Activated T-helper 2 cell treated with anti-CD3 and anti-CD28 coated beads, Interferon-gamma antibody, Interleukin-2, Interleukin-4, amounts not matched to agents 10 μg/mL and 5 μg/mL and 100 μg/mL, durations not matched to agents 14 hours and 24 hours and 36 hours (primary cell): ENCODE measurements at regions of chr16 and their contacts with region 1.

Region 1: GRCh38 chr16:15592324-15592723 is 50.6 kb downstream of the MARF1 start:
- DNase-seq: no peak
- H3K4me3 Mint-ChIP-seq: no peak overlapping the region
- H3K27ac Mint-ChIP-seq: no peak overlapping the region
- H3K4me1 Mint-ChIP-seq: peaks cover 23% of the 10 kb centered on the region
- H3K27me3 Mint-ChIP-seq: no peaks in the 10 kb centered on the region

Region 2: DNA sequence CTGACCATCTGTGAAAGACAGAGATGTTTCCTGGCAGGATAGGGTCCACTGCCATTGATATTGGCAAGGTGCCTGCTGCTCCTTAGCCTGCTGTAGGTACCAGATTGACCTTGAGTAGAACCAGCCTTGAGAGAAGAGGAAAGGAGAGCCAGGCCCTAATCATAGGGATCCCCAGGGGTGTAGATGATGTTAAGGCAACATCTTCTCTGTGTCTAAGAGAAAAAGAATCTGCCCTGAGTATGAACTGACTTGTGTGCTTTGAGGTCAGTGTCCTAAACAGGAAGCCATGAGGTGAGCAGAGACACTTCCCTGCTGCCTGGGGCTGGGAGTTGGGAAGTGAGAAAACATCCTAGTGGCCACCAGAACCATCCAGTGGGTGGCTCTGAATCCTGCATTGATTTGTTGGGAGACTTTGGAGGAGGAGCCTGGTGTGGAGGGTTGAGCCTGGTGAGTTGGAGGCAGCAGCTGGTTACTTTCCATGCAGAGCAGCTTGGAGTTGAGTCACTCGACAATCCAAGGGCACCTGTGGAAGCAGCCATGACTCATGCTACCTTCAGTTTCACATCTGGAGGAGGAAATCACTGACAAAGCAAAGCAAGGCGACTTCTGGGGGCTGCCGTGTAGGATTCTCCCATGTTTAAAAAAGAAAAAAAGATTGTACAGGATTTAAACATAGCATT is 110.1 kb before region 1 on chr16:
- intact Hi-C with region 1: loop called (anchors 2 kb)
- DNase-seq: no peak
- H3K4me3 Mint-ChIP-seq: no peak overlapping the region
- H3K27ac Mint-ChIP-seq: peak overlapping the region; percentile 44
- H3K4me1 Mint-ChIP-seq: peaks cover 27% of the 10 kb centered on the region
- H3K27me3 Mint-ChIP-seq: no peaks in the 10 kb centered on the region

Region 3: GRCh38 chr16:15509593-15510535 is 82.5 kb before region 1 on chr16:
- intact Hi-C with region 1: loop called (anchors 1 kb)
- DNase-seq: peak; percentile 22
- H3K4me3 Mint-ChIP-seq: no peak overlapping the region
- H3K27ac Mint-ChIP-seq: peak overlapping the region; percentile 80
- H3K4me1 Mint-ChIP-seq: peaks cover 35% of the 10 kb centered on the region
- H3K27me3 Mint-ChIP-seq: peaks cover 4% of the 10 kb centered on the region

Region 4: GRCh38 chr16:15572329-15573001 is 19.9 kb before region 1 on chr16:
- intact Hi-C with region 1: loop called (anchors 1 kb)
- DNase-seq: no peak
- H3K4me3 Mint-ChIP-seq: no peak overlapping the region
- H3K27ac Mint-ChIP-seq: peak overlapping the region; percentile 68
- H3K4me1 Mint-ChIP-seq: peaks cover 19% of the 10 kb centered on the region
- H3K27me3 Mint-ChIP-seq: no peaks in the 10 kb centered on the region

Region 5: DNA sequence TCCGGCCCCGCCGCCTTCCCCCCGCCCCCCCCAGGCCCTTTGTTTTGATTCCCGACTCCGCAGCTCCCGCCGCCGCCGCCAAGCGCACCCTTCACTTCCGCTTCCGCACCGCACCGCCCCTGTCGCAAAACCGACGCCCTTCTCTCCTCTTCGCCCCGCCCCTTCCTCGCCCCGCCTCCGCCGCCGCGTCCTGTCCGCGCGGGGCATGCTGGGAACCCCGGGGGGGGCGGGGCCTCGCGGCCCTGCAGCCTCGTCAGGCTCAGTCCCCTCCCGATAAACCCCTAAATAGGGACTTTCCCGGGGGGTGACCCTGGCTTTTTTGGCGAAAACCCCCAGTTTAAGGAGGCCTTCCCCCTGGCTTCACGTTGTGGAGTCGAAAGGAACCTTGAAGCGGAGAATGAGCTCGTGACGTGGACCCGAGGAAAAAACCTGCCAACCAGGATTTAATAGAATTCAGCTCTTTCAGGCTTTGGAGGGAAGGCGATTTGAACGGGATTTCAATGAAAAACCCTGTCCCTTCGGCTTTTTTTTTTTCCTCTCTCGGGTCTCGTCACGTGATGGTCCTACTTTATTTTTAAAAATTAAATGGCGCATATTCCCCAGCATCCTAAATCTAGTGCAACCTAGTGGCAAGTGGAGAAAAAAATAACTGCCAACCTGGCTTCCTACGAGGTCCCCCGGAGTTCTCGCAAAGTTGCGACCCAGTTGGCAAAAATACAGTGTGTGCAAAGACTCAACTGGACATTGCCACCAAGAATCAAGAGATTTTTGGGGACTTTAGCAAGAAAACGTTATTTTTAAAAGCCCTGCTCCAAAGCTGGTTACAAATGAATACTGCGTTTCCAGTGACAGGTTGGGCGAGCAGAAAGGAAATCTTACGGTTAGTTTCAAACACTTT is 51.0 kb after region 1 on chr16 and contains the start of gene MARF1:
- intact Hi-C with region 1: loop called (anchors 1 kb)
- DNase-seq: peak; percentile 98
- H3K4me3 Mint-ChIP-seq: peak within 1 kb of the TSS; percentile 93
- H3K27ac Mint-ChIP-seq: peak within 1 kb of the TSS; percentile 98
- H3K4me1 Mint-ChIP-seq: peaks cover 42% of the 10 kb centered on the region
- H3K27me3 Mint-ChIP-seq: no peaks in the 10 kb centered on the region
- total RNA-seq, gene MARF1: 49.9 and 56.4 TPM in 2 replicates

Region 6: DNA sequence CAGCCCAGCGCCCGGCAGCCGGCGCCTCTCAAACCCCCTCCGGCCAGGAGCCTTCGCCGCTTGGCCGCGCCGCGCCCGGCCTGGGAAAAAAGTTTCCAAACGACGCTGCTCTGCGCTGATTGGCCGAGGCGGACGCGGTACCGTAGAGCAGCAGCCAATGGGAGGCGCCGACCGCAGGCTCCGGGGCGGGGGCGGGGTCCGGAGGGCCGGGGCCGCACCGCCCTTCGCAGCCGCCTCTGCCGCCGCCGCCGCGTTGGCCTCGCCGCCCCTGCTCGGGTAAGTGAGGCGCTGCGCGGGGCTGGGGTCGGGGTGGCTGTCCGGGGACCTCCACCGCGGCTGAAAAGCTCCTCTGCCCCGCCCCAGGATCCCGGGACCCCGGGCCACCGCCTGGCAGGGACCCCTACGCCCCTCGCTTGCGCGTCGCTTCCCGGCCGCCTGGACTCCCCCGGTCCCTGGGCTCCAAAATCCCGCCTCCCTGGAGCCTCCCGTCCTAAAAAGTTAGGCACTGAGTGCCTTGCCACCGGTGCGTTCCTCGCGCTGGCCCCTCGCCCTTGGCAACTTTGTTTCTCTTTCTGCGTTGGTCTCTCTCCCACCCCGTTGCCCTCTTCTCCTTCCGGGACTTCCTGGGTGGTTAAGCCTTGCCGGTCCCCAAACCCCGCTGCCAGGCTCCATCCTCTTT is 57.8 kb after region 1 on chr16 and contains the start of gene NDE1:
- intact Hi-C with region 1: loop called (anchors 2 kb)
- DNase-seq: peak; percentile 78
- H3K4me3 Mint-ChIP-seq: peak within 1 kb of the TSS; percentile 98
- H3K27ac Mint-ChIP-seq: peak within 1 kb of the TSS; percentile 99
- H3K4me1 Mint-ChIP-seq: peaks cover 16% of the 10 kb centered on the region
- H3K27me3 Mint-ChIP-seq: no peaks in the 10 kb centered on the region
- total RNA-seq, gene NDE1: 88.8 and 97.7 TPM in 2 replicates

Region 7: GRCh38 chr16:15879255-15879811 is 287.0 kb after region 1 on chr16:
- intact Hi-C with region 1: no loop called
- DNase-seq: no peak
- H3K4me3 Mint-ChIP-seq: no peak overlapping the region
- H3K27ac Mint-ChIP-seq: peak overlapping the region; percentile 64
- H3K4me1 Mint-ChIP-seq: peaks cover 24% of the 10 kb centered on the region
- H3K27me3 Mint-ChIP-seq: no peaks in the 10 kb centered on the region